IMR-90 (cell line): ENCODE measurements at regions of chr1 and their contacts with region 1.

Region 1: GRCh38 chr1:16243936-16244649 is 7.1 kb upstream of the CPLANE2 start:
- DNase-seq: peak; percentile 81
- ATAC-seq: peak; percentile 93
- H3K4me3 ChIP-seq: no peak overlapping the region
- H3K27ac ChIP-seq: no peak overlapping the region
- H3K4me1 ChIP-seq: peaks cover 10% of the 10 kb centered on the region
- H3K27me3 ChIP-seq: no peaks in the 10 kb centered on the region
- CTCF ChIP-seq: peak; percentile 89
- POLR2A ChIP-seq: peak; percentile 31; the same call in 1 of the 2 replicates
- RAD21 ChIP-seq: peak; percentile 90

Region 2: GRCh38 chr1:16195518-16195905 is 48.6 kb before region 1 on chr1:
- CTCF ChIA-PET with region 1: no interaction called
- POLR2A ChIA-PET with region 1: no interaction called
- dilution Hi-C with region 1: no loop called
- in situ Hi-C with region 1: no loop called
- intact Hi-C with region 1: loop called (anchors 2 kb)
- DNase-seq: no peak
- ATAC-seq: no peak
- H3K4me3 ChIP-seq: no peak overlapping the region
- H3K27ac ChIP-seq: no peak overlapping the region
- H3K4me1 ChIP-seq: no peaks in the 10 kb centered on the region
- H3K27me3 ChIP-seq: no peaks in the 10 kb centered on the region
- CTCF ChIP-seq: no peak
- POLR2A ChIP-seq: no peak
- RAD21 ChIP-seq: no peak

Region 3: DNA sequence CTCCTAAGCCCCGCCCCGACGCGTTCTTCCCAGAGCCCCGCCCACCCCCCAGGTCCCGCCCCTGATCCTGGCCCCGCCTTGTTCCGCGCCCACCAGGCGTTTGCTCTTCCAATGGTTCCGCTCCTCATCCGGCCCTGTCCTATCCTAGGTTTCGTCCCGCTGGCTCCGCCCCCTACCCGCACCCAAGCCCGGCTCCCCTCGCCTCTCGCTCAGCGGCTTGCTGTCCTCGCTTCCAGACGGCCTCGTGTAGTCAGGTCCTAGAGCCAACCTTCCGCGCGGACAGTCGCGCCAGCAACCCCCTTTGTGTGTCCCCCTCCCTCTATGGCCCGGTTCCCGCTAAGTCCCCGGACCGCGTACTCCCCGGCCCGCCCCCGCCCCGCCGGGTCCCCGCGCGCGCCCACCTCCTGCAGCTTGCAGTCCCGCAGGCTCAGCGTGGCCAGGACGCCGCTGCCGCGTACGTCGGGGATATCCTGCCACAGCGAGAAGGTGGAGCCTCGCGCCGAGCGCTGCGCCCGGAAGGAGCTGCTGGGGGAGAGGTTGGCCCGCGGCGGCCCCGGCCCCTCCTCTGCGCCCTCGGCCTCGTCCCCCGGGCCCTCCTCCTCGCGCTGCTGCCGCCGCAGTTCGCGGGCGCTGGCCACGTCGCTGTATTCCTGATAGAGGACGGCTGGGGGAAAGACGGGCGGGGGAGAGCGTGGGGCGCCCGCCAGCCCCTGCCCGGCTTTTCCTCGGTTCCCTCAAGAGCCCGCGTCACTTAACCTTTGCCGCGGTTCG is 37.4 kb before region 1 on chr1:
- CTCF ChIA-PET with region 1: interaction called, 5 read pairs
- POLR2A ChIA-PET with region 1: no interaction called
- dilution Hi-C with region 1: no loop called
- in situ Hi-C with region 1: no loop called
- intact Hi-C with region 1: loop called (anchors 5 kb)
- DNase-seq: peak; percentile 98
- ATAC-seq: peak; percentile 97
- H3K4me3 ChIP-seq: peak overlapping the region; percentile 32
- H3K27ac ChIP-seq: peak overlapping the region; percentile 76
- H3K4me1 ChIP-seq: peaks cover 9% of the 10 kb centered on the region
- H3K27me3 ChIP-seq: no peaks in the 10 kb centered on the region
- CTCF ChIP-seq: 0 out of 2 replicates have a peak, but pooled peaks have one; percentile 0
- POLR2A ChIP-seq: peak; percentile 89
- RAD21 ChIP-seq: no peak